ENCODE measurements at regions of chr2 and their contacts with region 1.

Region 1: GRCh38 chr2:86562922-86563649 is at the start of gene CHMP3:
- DNase-seq: peak; percentile 94 to 99 (median 97)
- H3K4me3 ChIP-seq: peak within 1 kb of the TSS; percentile 88
- H3K4me3 Mint-ChIP-seq: peak within 1 kb of the TSS; percentile 92 to 98 (median 98)
- H3K27ac ChIP-seq: peak within 1 kb of the TSS; percentile 99
- H3K27ac Mint-ChIP-seq: peak within 1 kb of the TSS; percentile 94 to 99 (median 99)
- H3K4me1 ChIP-seq: peaks cover 33% of the 10 kb centered on the region
- H3K4me1 Mint-ChIP-seq: peaks cover 36 to 43% (median 37%) of the 10 kb centered on the region in 3 donors
- H3K27me3 ChIP-seq: no peaks in the 10 kb centered on the region
- H3K27me3 Mint-ChIP-seq: peaks cover 1 to 21% of the 10 kb centered on the region in 2 donors
- total RNA-seq, gene CHMP3: 51.7 to 58.9 TPM

Region 2: GRCh38 chr2:86584151-86584913 is 21.2 kb after region 1 on chr2:
- CTCF ChIA-PET with region 1: interaction called, 3 read pairs
- POLR2A ChIA-PET with region 1: interaction called, 11 read pairs
- DNase-seq: peak in 2 of 5 donors; percentile 6 to 20
- H3K4me3 ChIP-seq: peak overlapping the region; percentile 4
- H3K4me3 Mint-ChIP-seq: peak overlapping the region in 5 of 7 donors; percentile 6 to 44 (median 42)
- H3K27ac ChIP-seq: no peak overlapping the region
- H3K27ac Mint-ChIP-seq: peak overlapping the region in 7 of 8 donors; percentile 21 to 87 (median 83)
- H3K4me1 ChIP-seq: peaks cover 14% of the 10 kb centered on the region
- H3K4me1 Mint-ChIP-seq: peaks cover 11 to 26% (median 13%) of the 10 kb centered on the region in 3 donors
- H3K27me3 ChIP-seq: no peaks in the 10 kb centered on the region
- H3K27me3 Mint-ChIP-seq: peaks cover 3 to 4% of the 10 kb centered on the region in 2 donors

Region 3: DNA sequence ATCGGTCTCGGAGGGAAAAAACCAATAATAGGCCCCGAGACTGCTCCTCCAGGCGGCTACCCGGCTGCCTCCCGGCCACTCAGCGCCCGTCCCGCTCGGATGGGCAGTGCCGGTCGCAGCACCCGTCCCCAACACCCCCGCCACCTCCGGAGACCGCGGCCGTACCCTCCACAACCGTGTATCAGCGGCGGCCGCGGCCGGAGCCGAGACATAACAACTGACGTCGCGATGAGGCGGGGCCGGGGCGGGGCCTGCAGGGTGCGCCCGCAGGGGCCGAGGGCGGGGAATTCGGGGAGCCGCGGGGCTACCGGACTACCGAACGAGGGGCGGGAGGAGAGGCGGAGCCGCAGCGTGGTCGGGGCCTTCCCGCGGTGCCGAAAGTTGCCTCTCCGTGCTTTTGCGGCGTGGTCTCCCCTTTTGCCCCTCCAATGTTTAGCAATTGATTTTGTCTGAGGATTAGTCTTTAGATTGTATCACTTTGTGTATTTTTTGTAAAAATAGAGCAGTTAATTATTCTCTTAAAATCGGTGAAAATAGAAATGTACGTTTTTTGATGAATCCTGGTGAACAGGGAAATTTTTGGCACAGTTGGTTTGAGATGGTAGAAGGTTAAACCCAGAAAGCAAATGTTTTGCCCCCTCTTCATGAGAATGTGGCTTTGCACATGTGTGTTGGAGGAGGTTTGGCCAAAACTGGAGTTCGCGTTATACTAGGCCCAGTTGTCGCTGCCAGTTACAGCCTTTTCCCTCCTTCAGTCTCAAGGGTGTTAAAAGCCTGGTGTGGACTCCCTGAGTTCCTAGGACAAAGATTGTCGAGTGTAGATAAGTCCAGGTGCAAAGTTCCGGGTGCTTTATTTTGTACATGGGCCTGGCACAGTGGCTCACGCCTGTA is 60.8 kb after region 1 on chr2 and contains the start of gene RNF103:
- CTCF ChIA-PET with region 1: interaction called, 3 read pairs
- POLR2A ChIA-PET with region 1: interaction called, 10 read pairs
- DNase-seq: peak; percentile 88 to 93 (median 90)
- H3K4me3 ChIP-seq: peak within 1 kb of the TSS; percentile 82
- H3K4me3 Mint-ChIP-seq: peak within 1 kb of the TSS; percentile 90 to 97 (median 94)
- H3K27ac ChIP-seq: peak within 1 kb of the TSS; percentile 76
- H3K27ac Mint-ChIP-seq: peak within 1 kb of the TSS; percentile 90 to 99 (median 94)
- H3K4me1 ChIP-seq: peaks cover 12% of the 10 kb centered on the region
- H3K4me1 Mint-ChIP-seq: peaks cover 37 to 43% (median 42%) of the 10 kb centered on the region in 3 donors
- H3K27me3 ChIP-seq: no peaks in the 10 kb centered on the region
- H3K27me3 Mint-ChIP-seq: peaks cover 2 to 8% of the 10 kb centered on the region in 2 donors
- total RNA-seq, gene RNF103: 14.6 TPM

Region 4: DNA sequence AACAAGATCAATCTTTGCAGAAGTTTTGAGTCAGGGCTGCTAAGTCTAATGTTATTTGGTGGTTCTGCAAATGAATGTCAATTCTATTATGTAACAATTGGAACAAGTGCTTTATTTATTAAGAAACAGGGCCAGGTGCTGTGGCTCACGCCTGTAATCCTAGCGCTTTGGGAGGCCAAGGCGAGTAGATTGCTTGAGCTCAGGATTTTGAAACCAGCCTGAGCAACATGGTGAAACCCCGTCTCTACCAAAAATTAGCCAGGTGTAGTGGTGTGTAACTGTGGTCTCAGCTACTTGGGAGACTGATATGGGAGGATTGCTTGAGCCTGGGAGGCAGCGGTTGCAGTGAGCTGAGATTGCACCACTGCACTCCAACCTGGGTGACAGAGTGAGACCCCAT is 73.8 kb after region 1 on chr2:
- CTCF ChIA-PET with region 1: no interaction called
- POLR2A ChIA-PET with region 1: no interaction called
- DNase-seq: no peak
- H3K4me3 ChIP-seq: no peak overlapping the region
- H3K4me3 Mint-ChIP-seq: no peak overlapping the region
- H3K27ac ChIP-seq: no peak overlapping the region
- H3K27ac Mint-ChIP-seq: no peak overlapping the region
- H3K4me1 ChIP-seq: no peaks in the 10 kb centered on the region
- H3K4me1 Mint-ChIP-seq: no peaks in the 10 kb centered on the region
- H3K27me3 ChIP-seq: no peaks in the 10 kb centered on the region
- H3K27me3 Mint-ChIP-seq: peaks cover 0 to 1% of the 10 kb centered on the region in 2 donors

Measured in CD8-positive, alpha-beta memory T cell (primary cell).